ENCODE measurements at regions of chr4 and their contacts with region 1.

Region 1: GRCh38 chr4:175536852-175537453 is 275.1 kb downstream of the GPM6A start:
- DNase-seq: peak; percentile 84
- ATAC-seq: peak; percentile 50
- H3K4me3 ChIP-seq: no peak overlapping the region
- H3K27ac ChIP-seq: no peak overlapping the region
- H3K4me1 ChIP-seq: peaks cover 25% of the 10 kb centered on the region
- H3K27me3 ChIP-seq: no peaks in the 10 kb centered on the region
- CTCF ChIP-seq: peak; percentile 57

Region 2: GRCh38 chr4:174764105-174764729 is 772.7 kb before region 1 on chr4:
- CTCF ChIA-PET with region 1: no interaction called
- POLR2A ChIA-PET with region 1: no interaction called
- intact Hi-C with region 1: loop called (anchors 5 kb)
- DNase-seq: peak; percentile 62
- ATAC-seq: peak; percentile 56
- H3K4me3 ChIP-seq: no peak overlapping the region
- H3K27ac ChIP-seq: no peak overlapping the region
- H3K4me1 ChIP-seq: peaks cover 9% of the 10 kb centered on the region
- H3K27me3 ChIP-seq: no peaks in the 10 kb centered on the region
- CTCF ChIP-seq: peak; percentile 76

Region 3: DNA sequence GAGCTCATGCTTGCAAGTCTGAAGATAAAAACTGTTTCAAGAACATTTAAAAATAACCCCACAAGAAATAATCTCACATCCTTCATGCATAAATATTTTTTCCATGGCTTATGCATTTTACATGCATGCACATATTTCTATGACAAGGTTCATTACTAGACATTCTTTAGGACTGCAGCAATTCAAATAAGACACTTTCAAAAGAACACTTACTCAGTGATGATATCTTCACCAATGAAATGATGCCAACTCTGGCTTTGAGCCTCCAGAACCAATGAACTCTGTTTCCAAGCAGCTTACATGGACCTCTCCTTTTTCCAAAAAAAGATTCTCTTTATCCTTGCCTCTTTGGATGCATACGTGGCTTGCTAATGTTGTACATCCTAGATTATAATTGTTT is 338.9 kb before region 1 on chr4:
- CTCF ChIA-PET with region 1: no interaction called
- POLR2A ChIA-PET with region 1: no interaction called
- intact Hi-C with region 1: loop called (anchors 10 kb)
- DNase-seq: peak; percentile 6
- ATAC-seq: no peak
- H3K4me3 ChIP-seq: peak overlapping the region; percentile 62; the same call in 1 of the 2 replicates
- H3K27ac ChIP-seq: no peak overlapping the region
- H3K4me1 ChIP-seq: peaks cover 29% of the 10 kb centered on the region
- H3K27me3 ChIP-seq: no peaks in the 10 kb centered on the region
- CTCF ChIP-seq: no peak

Region 4: GRCh38 chr4:175280802-175281201 is 256.2 kb before region 1 on chr4:
- CTCF ChIA-PET with region 1: no interaction called
- POLR2A ChIA-PET with region 1: no interaction called
- intact Hi-C with region 1: loop called (anchors 2 kb)
- DNase-seq: no peak
- ATAC-seq: no peak
- H3K4me3 ChIP-seq: no peak overlapping the region
- H3K27ac ChIP-seq: no peak overlapping the region
- H3K4me1 ChIP-seq: no peaks in the 10 kb centered on the region
- H3K27me3 ChIP-seq: no peaks in the 10 kb centered on the region
- CTCF ChIP-seq: no peak

Measured in PC-3 (cell line).